ENCODE measurements at regions of chr9 and their contacts with region 1.

Region 1: DNA sequence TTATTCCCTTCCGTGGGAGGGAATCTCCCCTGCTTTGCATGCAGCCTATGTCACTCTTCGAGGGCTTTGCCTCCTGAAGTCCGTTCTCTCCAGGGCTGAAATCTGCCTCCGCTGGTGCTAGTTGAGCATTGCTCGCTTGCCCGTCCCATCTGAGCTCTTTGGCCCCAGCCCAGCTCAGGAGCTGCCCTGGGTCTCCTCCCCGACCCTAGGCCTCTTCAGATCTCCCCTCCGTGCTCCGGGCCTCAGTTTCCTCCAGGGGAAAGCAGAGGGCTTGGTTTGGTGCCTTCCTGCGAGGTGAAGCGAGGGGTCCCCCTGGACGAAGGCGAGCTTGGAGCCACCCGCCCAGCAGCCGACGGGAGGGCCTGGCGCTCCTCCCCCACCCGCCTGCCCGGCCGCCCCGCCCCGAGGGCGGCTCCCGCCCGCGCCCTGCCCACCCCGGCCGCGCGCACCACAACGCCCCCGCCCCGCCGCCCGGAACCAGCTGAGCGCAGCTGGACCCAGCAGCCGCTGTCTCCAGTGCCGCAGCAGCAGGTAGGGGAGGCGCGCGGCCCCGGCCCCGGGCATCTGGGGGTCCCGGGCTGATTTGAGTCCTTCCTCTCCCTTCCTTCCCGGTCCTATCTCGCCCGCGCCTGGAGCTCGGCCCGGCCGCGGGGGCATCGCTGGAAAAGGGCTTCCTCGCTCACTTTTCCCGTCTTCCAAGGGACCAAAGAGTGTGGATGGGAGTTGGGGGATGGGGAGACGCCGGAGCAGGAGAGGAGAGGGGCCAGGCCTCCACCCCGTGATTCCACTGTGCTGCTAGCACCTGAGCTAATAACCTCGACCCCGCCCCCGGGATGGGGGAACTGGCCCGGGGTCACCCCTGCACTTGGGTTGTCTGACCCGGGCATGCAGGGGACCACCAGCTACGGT is at the start of gene GSN:
- DNase-seq: peak; percentile 60
- H3K4me3 ChIP-seq: peak within 1 kb of the TSS; percentile 76 to 89 (median 88)
- H3K27ac ChIP-seq: peak within 1 kb of the TSS; percentile 73
- H3K4me1 ChIP-seq: peaks cover 37% of the 10 kb centered on the region
- H3K27me3 ChIP-seq: no peaks in the 10 kb centered on the region
- CTCF ChIP-seq: no peak
- total RNA-seq, gene GSN: 196 to 723 TPM

Region 2: DNA sequence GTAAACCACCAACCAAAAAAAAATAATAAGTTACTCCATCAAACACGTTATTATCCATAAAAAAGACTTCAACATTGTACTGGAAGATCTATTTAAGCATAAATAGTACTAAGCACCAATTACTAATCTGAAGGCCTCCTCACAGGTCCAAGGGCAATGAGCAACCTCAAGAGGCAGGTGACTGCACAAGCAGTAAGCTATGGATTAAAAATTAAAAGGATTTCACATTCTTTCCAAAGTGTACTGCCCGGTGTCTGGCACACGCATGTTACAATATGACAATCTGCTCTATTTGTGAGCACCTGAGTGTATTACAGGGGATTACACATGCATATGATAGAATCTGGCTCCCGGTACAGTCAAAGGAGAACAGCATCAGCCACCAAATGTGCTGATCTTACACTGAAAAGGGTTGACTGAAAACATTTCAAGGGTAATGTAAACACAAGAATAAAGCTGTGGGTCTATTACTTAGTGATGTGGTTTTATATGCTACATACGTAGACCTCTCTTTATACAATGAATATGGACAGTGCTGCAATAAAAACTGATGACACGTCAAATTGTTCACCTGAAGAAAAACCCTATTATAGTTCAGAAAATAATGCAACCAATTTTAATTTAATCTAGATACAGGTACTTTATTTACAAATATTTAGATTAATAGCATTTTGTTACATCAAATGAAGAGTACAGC is 89.1 kb before region 1 on chr9:
- CTCF ChIA-PET with region 1: no interaction called
- dilution Hi-C with region 1: no loop called
- in situ Hi-C with region 1: no loop called
- intact Hi-C with region 1: no loop called
- DNase-seq: no peak
- H3K4me3 ChIP-seq: no peak overlapping the region
- H3K27ac ChIP-seq: no peak overlapping the region
- H3K4me1 ChIP-seq: no peaks in the 10 kb centered on the region
- H3K27me3 ChIP-seq: no peaks in the 10 kb centered on the region
- CTCF ChIP-seq: no peak

Region 3: DNA sequence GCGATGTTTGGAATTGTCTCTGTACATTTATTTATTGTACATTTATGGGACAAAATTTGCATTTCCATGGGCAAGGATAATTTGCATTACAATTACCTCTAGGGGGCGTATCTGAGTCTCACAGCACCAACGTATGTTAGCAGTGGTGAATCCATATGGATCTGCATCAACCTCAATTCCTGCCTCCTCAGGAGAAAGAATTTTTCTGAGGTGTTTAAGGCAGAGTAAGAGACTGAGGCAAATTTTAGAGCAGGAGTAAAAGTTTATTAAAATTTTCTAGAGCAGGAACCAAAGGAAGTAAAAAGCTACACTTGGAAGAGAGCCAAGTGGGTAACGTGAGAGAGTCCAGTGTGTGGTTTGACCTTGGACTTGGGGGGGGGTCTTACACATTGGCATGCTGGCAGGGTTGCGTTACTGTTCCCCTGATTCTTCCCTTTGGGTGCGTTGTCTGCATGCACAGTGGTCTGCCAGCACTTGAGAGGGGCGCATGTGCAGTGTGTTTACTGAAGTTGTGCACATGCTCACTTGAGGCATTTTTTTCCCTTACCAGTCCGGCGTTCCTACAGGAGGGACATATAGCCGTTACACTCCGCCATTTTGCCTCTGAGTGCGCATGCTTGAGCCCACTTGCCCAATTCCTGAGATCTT is 45.3 kb before region 1 on chr9:
- CTCF ChIA-PET with region 1: interaction called, 4 read pairs
- dilution Hi-C with region 1: no loop called
- in situ Hi-C with region 1: no loop called
- intact Hi-C with region 1: loop called (anchors 2 kb)
- DNase-seq: peak; percentile 30
- H3K4me3 ChIP-seq: no peak overlapping the region
- H3K27ac ChIP-seq: no peak overlapping the region
- H3K4me1 ChIP-seq: peaks cover 10% of the 10 kb centered on the region
- H3K27me3 ChIP-seq: no peaks in the 10 kb centered on the region
- CTCF ChIP-seq: peak; percentile 82 to 83

Region 4: GRCh38 chr9:121233906-121234901 is 33.7 kb before region 1 on chr9:
- CTCF ChIA-PET with region 1: no interaction called
- dilution Hi-C with region 1: no loop called
- in situ Hi-C with region 1: no loop called
- intact Hi-C with region 1: loop called (anchors 2 kb)
- DNase-seq: peak; percentile 50
- H3K4me3 ChIP-seq: no peak overlapping the region
- H3K27ac ChIP-seq: peak overlapping the region; percentile 27
- H3K4me1 ChIP-seq: peaks cover 20% of the 10 kb centered on the region
- H3K27me3 ChIP-seq: no peaks in the 10 kb centered on the region
- CTCF ChIP-seq: no peak

Region 5: GRCh38 chr9:121350993-121351561 is 83.1 kb after region 1 on chr9:
- CTCF ChIA-PET with region 1: no interaction called
- dilution Hi-C with region 1: no loop called
- in situ Hi-C with region 1: no loop called
- intact Hi-C with region 1: no loop called
- DNase-seq: peak; percentile 84
- H3K4me3 ChIP-seq: no peak overlapping the region
- H3K27ac ChIP-seq: peak overlapping the region; percentile 9
- H3K4me1 ChIP-seq: peaks cover 16% of the 10 kb centered on the region
- H3K27me3 ChIP-seq: no peaks in the 10 kb centered on the region
- CTCF ChIP-seq: no peak

Region 6: GRCh38 chr9:122389799-122390481 is 1122.0 kb after region 1 on chr9:
- CTCF ChIA-PET with region 1: no interaction called
- dilution Hi-C with region 1: no loop called
- in situ Hi-C with region 1: no loop called
- intact Hi-C with region 1: no loop called
- DNase-seq: peak; percentile 50
- H3K4me3 ChIP-seq: no peak overlapping the region
- H3K27ac ChIP-seq: no peak overlapping the region
- H3K4me1 ChIP-seq: peaks cover 23% of the 10 kb centered on the region
- H3K27me3 ChIP-seq: no peaks in the 10 kb centered on the region
- CTCF ChIP-seq: no peak

Measured in mammary epithelial cell (primary cell).